ENCODE measurements at regions of chr21 and their contacts with region 1.

Region 1: GRCh38 chr21:33641336-33642026 is at the start of gene CRYZL1:
- DNase-seq: peak; percentile 96 to 100 (median 100)
- ATAC-seq: peak; percentile 89
- H3K4me3 ChIP-seq: peak within 1 kb of the TSS; percentile 97
- H3K4me3 Mint-ChIP-seq: peak within 1 kb of the TSS; percentile 83 to 99 (median 93)
- H3K27ac ChIP-seq: peak within 1 kb of the TSS; percentile 75
- H3K27ac Mint-ChIP-seq: peak within 1 kb of the TSS; percentile 85 to 100 (median 94)
- H3K4me1 ChIP-seq: peaks cover 4 to 7% of the 10 kb centered on the region in 2 donors
- H3K4me1 Mint-ChIP-seq: peaks cover 19 to 50% (median 37%) of the 10 kb centered on the region in 7 donors
- H3K27me3 ChIP-seq: no peaks in the 10 kb centered on the region
- H3K27me3 Mint-ChIP-seq: peaks cover 9 to 29% (median 15%) of the 10 kb centered on the region in 5 donors
- total RNA-seq, gene CRYZL1: 34.6 to 75.5 (median 40.4) TPM

Region 2: GRCh38 chr21:32278518-32279376 is 1362.7 kb before region 1 on chr21 and contains the start of gene MIS18A:
- CTCF ChIA-PET with region 1: no interaction called
- POLR2A ChIA-PET with region 1: no interaction called
- intact Hi-C with region 1: loop called (anchors 2 to 5 kb)
- DNase-seq: peak; percentile 92 to 98 (median 95)
- ATAC-seq: peak; percentile 97
- H3K4me3 ChIP-seq: peak within 1 kb of the TSS; percentile 90
- H3K4me3 Mint-ChIP-seq: peak within 1 kb of the TSS; percentile 95 to 100 (median 98)
- H3K27ac ChIP-seq: peak within 1 kb of the TSS; percentile 70
- H3K27ac Mint-ChIP-seq: peak within 1 kb of the TSS; percentile 90 to 97 (median 94)
- H3K4me1 ChIP-seq: peaks cover 14 to 16% of the 10 kb centered on the region in 2 donors
- H3K4me1 Mint-ChIP-seq: peaks cover 8 to 36% (median 33%) of the 10 kb centered on the region in 7 donors
- H3K27me3 ChIP-seq: no peaks in the 10 kb centered on the region
- H3K27me3 Mint-ChIP-seq: no peaks in the 10 kb centered on the region
- total RNA-seq, gene MIS18A: 3.3 to 16.4 (median 8.4) TPM

Region 3: DNA sequence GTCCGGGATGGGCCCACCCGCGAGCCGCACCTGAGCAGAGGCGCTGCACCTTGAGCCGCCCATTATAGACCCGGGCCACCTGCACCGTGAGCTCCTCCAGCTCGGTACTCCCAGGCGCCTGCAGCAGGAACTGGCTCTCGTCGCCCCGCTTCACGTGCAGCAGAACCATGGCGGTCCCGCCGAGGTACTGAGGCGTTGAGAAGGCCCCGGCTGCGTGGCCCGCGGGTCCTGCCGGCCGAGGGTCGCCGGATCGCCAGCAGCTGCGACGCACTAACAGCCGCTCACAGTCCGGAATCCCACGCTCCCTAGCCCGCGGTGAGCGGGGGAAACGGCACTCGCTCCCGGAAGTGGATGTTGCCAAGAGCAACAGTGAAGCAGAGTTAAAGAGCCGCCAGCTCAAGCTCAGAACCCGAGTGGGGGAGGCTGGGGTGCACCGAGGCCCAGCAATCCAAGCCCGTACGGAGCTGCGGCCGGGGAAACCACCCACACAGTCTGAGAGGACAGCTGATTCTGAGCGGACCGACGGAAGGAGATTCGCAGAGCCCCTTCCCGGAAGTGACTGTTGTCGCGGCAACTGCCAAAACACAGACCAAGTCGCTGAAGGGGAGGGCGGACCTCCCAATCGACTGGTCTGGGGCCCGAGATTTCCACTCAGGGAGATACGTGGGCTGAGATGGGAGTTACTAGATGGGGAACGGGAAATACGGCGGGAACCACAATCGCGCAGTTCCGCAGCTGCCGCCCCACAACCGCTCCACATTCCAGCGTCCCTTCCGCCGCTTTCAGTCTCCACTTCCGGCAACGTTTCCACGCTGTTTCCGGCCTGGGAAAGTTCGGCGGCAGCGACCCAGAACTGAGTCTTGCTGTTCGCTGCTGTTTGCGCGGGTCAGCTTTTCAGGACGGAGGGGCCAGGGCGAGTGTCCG is 1029.1 kb before region 1 on chr21 and contains the start of gene CFAP298:
- CTCF ChIA-PET with region 1: no interaction called
- POLR2A ChIA-PET with region 1: no interaction called
- intact Hi-C with region 1: loop called in 1 of 2 experiments (anchors 5 kb)
- DNase-seq: peak; percentile 78 to 93 (median 89)
- ATAC-seq: peak; percentile 97
- H3K4me3 ChIP-seq: peak within 1 kb of the TSS; percentile 100
- H3K4me3 Mint-ChIP-seq: peak within 1 kb of the TSS; percentile 95 to 98 (median 97)
- H3K27ac ChIP-seq: peak within 1 kb of the TSS; percentile 87
- H3K27ac Mint-ChIP-seq: peak within 1 kb of the TSS; percentile 90 to 98 (median 97)
- H3K4me1 ChIP-seq: peaks cover 12% of the 10 kb centered on the region in 2 donors
- H3K4me1 Mint-ChIP-seq: peaks cover 0 to 34% (median 12%) of the 10 kb centered on the region in 7 donors
- H3K27me3 ChIP-seq: no peaks in the 10 kb centered on the region
- H3K27me3 Mint-ChIP-seq: peaks cover 0 to 15% (median 0%) of the 10 kb centered on the region in 5 donors
- total RNA-seq, gene CFAP298: 16.8 to 34.5 (median 31.3) TPM

Region 4: GRCh38 chr21:33324291-33325221 is 316.9 kb before region 1 on chr21 and contains the start of gene IFNAR1:
- CTCF ChIA-PET with region 1: no interaction called
- POLR2A ChIA-PET with region 1: no interaction called
- intact Hi-C with region 1: loop called (anchors 1 to 2 kb)
- DNase-seq: peak; percentile 94 to 100 (median 98)
- ATAC-seq: peak; percentile 94
- H3K4me3 ChIP-seq: peak within 1 kb of the TSS; percentile 87
- H3K4me3 Mint-ChIP-seq: no peak within 1 kb of the TSS
- H3K27ac ChIP-seq: peak within 1 kb of the TSS; percentile 94
- H3K27ac Mint-ChIP-seq: no peak within 1 kb of the TSS
- H3K4me1 ChIP-seq: peaks cover 21 to 23% of the 10 kb centered on the region in 2 donors
- H3K4me1 Mint-ChIP-seq: peaks cover 0 to 33% (median 26%) of the 10 kb centered on the region in 7 donors
- H3K27me3 ChIP-seq: no peaks in the 10 kb centered on the region
- H3K27me3 Mint-ChIP-seq: peaks cover 0 to 2% (median 0%) of the 10 kb centered on the region in 5 donors
- total RNA-seq, gene IFNAR1: 24.7 to 60.8 (median 40.0) TPM

Region 5: GRCh38 chr21:33588485-33589335 is 52.8 kb before region 1 on chr21 and contains the start of gene DONSON:
- CTCF ChIA-PET with region 1: no interaction called
- POLR2A ChIA-PET with region 1: no interaction called
- intact Hi-C with region 1: loop called (anchors 1 kb)
- DNase-seq: peak; percentile 76 to 97 (median 89)
- ATAC-seq: peak; percentile 98
- H3K4me3 ChIP-seq: peak within 1 kb of the TSS; percentile 63
- H3K4me3 Mint-ChIP-seq: peak within 1 kb of the TSS; percentile 90 to 96 (median 94)
- H3K27ac ChIP-seq: peak within 1 kb of the TSS; percentile 89
- H3K27ac Mint-ChIP-seq: peak within 1 kb of the TSS; percentile 34 to 96 (median 89)
- H3K4me1 ChIP-seq: peaks cover 5% of the 10 kb centered on the region in 2 donors
- H3K4me1 Mint-ChIP-seq: peaks cover 0 to 31% (median 20%) of the 10 kb centered on the region in 7 donors
- H3K27me3 ChIP-seq: no peaks in the 10 kb centered on the region
- H3K27me3 Mint-ChIP-seq: peaks cover 0 to 1% (median 0%) of the 10 kb centered on the region in 5 donors
- total RNA-seq, gene DONSON: 8.9 to 30.8 (median 10.7) TPM

Region 6: GRCh38 chr21:34073032-34073869 is 431.8 kb after region 1 on chr21 and contains the starts of genes MRPS6 and SLC5A3:
- CTCF ChIA-PET with region 1: no interaction called
- POLR2A ChIA-PET with region 1: no interaction called
- intact Hi-C with region 1: loop called in 1 of 2 experiments (anchors 2 kb)
- DNase-seq: peak; percentile 58 to 82 (median 72)
- ATAC-seq: peak; percentile 89
- H3K4me3 ChIP-seq: peak within 1 kb of the TSS; percentile 72
- H3K4me3 Mint-ChIP-seq: peak within 1 kb of the TSS; percentile 88 to 98 (median 96)
- H3K27ac ChIP-seq: peak within 1 kb of the TSS; percentile 82
- H3K27ac Mint-ChIP-seq: peak within 1 kb of the TSS; percentile 89 to 95 (median 93)
- H3K4me1 ChIP-seq: peaks cover 31 to 34% of the 10 kb centered on the region in 2 donors
- H3K4me1 Mint-ChIP-seq: peaks cover 9 to 54% (median 46%) of the 10 kb centered on the region in 7 donors
- H3K27me3 ChIP-seq: no peaks in the 10 kb centered on the region
- H3K27me3 Mint-ChIP-seq: peaks cover 0 to 7% (median 0%) of the 10 kb centered on the region in 5 donors
- total RNA-seq, gene MRPS6: 25.5 to 92.7 (median 87.9) TPM
- total RNA-seq, gene SLC5A3: 8.8 to 45.5 (median 34.0) TPM